AG04449 (cell line): ENCODE measurements at regions of chr14 and their contacts with region 1.

Region 1: DNA sequence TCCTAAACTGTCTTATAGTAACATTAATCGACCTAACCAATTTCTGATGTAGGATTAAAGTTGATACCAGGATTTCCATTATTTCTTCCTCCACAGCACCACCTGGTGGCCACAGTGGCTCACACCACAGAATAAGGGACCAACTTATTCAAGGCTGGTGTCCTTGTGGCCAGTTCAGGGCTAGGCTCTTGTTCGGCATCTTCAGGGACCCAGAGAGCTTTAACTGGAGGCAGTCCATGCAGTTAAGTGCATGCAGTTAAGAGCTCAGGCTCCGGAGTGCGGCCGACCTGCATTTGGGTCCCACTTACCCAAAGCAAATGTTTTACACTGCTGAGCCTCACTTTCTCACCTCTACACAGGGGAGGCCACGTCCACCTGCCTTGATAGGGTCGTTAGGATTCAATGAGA is 42.0 kb upstream of the GPR68 start:
- DNase-seq: no peak
- H3K4me3 ChIP-seq: no peak overlapping the region
- CTCF ChIP-seq: peak; percentile 78

Region 2: DNA sequence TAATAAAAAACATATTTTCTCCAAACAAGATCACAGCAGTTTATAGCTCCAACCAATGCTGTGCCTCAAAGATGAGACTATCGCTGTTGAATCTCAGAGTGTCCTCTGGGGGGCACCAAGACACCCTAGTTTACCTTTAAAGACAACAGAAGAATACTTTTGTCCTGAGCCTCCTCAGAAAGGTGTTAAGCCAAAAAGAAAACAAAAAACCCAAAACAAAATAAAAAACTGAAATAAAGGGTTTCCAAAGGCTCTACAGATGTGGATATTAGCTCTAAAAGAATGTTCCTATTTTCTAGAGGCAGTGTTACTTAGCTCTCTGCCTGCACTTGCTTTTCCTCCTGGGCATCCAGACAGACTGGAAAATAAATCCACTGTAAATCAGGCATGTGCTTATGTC is 383.4 kb before region 1 on chr14:
- CTCF ChIA-PET with region 1: interaction called, 47 read pairs
- POLR2A ChIA-PET with region 1: no interaction called
- DNase-seq: peak; percentile 7
- H3K4me3 ChIP-seq: no peak overlapping the region
- CTCF ChIP-seq: peak; percentile 58

Region 3: DNA sequence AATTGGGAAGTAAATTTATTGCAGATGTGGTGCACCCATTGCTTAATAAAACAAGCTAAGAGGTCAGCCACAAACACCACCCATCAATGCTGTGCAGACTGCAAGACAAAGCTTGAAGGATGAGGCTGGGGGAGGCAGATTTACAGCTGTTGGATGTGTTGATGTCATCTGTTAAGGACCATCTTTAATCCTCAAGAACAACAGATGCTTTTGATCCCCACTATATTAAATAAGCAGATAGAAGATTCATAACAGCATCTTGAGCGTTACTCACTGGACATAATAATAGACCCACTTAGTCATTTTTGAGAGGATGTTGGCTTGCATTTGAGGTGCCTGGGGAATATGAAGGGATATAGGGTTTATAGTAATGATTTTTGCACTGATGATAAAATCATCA is 100.8 kb before region 1 on chr14:
- CTCF ChIA-PET with region 1: interaction called, 824 read pairs
- POLR2A ChIA-PET with region 1: no interaction called
- DNase-seq: no peak
- H3K4me3 ChIP-seq: no peak overlapping the region
- CTCF ChIP-seq: no peak

Region 4: GRCh38 chr14:91193069-91193468 is 93.5 kb before region 1 on chr14:
- CTCF ChIA-PET with region 1: interaction called, 11 read pairs
- POLR2A ChIA-PET with region 1: no interaction called
- DNase-seq: no peak
- H3K4me3 ChIP-seq: no peak overlapping the region
- CTCF ChIP-seq: no peak

Region 5: DNA sequence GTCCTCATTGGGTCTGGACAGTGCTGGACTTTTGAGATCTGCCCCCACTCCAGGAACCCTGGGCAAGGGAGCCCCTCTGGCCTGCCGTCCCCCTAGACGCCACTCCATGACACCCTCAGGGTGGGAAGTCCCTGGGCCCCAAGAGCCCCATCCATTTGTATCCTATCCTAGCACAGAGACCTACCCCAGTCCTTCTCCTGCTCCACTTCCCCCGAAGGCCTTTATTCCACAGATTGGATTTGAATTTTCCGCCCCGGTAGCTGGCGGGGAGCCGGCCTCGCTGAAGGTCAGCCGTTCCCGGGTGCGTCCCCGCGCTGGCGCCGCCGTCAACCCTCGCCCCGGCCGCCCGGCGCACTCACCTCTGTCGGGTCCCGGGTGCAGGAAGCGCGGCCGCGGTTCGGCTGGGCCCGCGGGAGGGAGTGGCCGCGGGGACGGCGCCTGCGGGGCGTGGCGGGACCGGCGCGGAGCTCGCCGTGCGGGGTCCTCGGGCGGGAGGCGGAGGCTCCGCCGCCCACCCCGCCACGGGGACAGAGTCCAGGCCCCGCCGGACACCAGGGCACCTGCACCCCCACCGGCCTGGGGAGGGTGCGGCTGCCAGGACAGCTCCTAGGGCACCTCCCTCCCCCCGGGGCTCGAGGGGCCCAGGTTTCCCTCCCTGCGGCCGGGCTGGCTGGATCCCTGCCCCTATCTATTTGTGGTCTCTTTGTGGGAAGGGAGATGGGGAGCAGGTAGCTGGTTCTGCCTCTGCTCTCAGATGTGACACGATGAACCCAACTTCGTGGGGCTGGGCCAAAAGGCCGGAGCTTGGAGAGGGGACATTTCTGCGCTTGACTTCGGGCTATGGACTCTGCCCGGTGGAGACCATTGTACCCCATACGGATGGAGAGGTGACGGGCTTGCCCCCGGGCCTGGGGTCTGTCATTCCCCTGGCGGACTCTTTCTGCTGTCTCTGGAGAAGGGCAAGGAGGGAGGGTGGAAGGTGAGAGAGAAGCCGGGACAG is 22.1 kb before region 1 on chr14:
- CTCF ChIA-PET with region 1: interaction called, 14 read pairs
- POLR2A ChIA-PET with region 1: no interaction called
- DNase-seq: no peak
- H3K4me3 ChIP-seq: peak overlapping the region; percentile 27
- CTCF ChIP-seq: no peak

Region 6: DNA sequence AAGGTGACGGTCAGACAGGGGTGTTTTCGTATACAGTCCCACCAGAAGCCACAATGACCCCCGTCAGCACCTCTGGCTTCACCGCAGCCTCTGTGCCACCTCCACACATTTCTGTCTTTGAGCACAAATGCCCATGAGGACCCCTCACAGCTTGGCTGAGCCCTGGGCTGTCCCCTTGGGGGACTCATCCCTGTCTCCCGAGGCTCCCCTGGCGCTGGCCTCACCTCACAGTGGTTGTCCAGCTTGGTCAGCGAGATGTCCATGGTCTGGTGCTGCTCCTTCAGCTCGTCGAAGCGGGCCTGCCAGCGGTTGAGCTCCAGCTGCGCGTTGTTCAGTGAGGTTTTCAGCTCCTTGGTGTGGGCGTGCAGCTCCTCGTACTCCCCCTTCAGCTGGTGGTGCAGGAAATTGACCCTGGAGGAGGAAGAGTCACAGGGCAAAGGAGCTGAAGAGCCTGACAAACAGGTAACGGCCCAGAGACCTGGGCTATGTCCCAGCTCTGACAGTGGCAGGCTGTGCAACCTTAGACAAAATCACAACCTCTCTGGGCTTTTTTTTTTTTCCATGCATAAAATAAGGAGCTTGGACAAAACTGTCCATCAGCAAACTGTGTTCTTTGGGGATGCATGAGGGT is 10.7 kb after region 1 on chr14:
- CTCF ChIA-PET with region 1: interaction called, 17 read pairs
- POLR2A ChIA-PET with region 1: no interaction called
- DNase-seq: no peak
- H3K4me3 ChIP-seq: no peak overlapping the region
- CTCF ChIP-seq: no peak